ENCODE measurements at regions of chr5 and their contacts with region 1.

Region 1: DNA sequence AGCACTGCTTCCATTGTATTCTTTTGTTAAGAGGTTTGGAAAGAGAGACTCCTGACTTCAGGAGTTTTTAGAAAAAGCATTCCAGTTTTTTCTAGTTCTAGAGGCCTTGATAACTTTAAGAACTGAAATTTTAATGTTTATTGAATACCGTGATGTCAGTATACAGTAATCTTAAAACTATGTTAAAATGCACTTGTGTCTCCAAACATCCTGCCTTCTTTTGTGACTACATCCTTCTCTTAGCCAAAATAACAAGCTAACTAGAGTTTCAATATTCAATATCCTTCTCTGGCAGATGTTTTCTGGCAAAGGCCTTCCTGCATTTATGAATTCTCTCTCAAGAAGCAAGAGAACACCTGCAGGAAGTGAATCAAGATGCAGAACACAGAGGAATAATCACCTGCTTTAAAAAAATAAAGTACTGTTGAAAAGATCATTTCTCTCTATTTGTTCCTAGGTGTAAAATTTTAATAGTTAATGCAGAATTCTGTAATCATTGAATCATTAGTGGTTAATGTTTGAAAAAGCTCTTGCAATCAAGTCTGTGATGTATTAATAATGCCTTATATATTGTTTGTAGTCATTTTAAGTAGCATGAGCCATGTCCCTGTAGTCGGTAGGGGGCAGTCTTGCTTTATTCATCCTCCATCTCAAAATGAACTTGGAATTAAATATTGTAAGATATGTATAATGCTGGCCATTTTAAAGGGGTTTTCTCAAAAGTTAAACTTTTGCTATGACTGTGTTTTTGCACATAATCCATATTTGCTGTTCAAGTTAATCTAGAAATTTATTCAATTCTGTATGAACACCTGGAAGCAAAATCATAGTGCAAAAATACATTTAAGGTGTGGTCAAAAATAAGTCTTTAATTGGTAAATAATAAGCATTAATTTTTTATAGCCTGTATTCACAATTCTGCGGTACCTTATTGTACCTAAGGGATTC is 43.1 kb downstream of the NDFIP1 start:
- DNase-seq: peak; percentile 72 to 90 (median 86)
- H3K4me3 ChIP-seq: no peak overlapping the region
- H3K27ac ChIP-seq: no peak overlapping the region
- H3K4me1 ChIP-seq: no peaks in the 10 kb centered on the region
- H3K27me3 ChIP-seq: no peaks in the 10 kb centered on the region

Region 2: DNA sequence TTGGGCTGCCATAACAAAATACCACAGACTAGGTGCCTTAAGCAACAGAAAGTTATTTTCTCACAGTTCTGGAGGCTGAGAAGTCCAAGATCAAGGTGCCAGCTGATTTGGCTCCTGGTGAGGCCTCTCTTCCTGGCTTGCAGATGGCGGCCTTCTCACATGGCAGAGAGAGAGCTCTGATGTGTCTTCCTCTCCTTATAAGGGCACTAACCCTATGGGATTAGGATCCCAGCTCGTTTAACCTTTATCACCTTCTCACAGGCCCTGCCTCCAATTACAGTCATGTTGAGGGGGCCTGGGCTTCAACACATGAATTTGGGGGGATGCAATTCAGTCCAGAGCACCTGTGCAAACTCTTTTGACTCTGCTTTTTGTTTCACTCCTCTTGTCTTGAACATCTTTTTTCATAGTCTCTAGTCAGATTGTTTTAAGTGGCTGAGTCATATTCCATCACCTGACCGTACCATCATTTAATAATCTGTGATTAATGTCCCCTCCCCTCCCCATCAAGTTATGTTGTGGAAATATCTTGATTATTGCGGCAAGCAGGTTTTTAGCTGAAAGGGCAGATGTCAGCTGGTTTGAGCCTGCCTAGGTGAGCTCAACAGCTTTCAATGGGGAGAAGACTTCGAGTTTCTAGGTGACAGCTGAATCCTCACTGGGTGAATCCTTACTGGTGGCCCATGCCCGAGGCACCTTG is 18.7 kb after region 1 on chr5:
- CTCF ChIA-PET with region 1: no interaction called
- POLR2A ChIA-PET with region 1: no interaction called
- DNase-seq: no peak
- H3K4me3 ChIP-seq: no peak overlapping the region
- H3K27ac ChIP-seq: no peak overlapping the region
- H3K4me1 ChIP-seq: no peaks in the 10 kb centered on the region
- H3K27me3 ChIP-seq: no peaks in the 10 kb centered on the region

Region 3: DNA sequence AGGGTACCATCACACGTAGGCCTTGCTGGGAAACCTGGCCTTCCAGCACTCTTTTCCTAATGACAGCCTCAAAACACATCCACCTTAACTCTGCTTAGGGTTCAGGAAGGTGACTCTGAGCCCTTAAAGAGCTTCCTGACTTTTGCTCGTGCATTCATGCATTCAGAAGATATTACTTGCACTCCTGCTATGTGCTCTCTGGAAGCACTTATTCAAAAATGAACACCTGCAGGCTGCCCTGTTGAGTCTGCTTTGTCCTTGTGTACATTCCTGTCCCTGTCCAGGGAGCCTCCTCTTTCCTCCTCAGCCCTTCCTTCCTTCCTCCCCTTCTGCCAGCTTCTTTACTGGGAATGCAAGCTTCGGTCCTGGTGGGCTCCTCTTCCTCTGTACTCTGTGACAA is 111.6 kb after region 1 on chr5:
- CTCF ChIA-PET with region 1: no interaction called
- POLR2A ChIA-PET with region 1: no interaction called
- DNase-seq: no peak
- H3K4me3 ChIP-seq: no peak overlapping the region
- H3K27ac ChIP-seq: no peak overlapping the region
- H3K4me1 ChIP-seq: no peaks in the 10 kb centered on the region
- H3K27me3 ChIP-seq: peaks cover 0 to 2% (median 0%) of the 10 kb centered on the region in 5 experiments

Region 4: DNA sequence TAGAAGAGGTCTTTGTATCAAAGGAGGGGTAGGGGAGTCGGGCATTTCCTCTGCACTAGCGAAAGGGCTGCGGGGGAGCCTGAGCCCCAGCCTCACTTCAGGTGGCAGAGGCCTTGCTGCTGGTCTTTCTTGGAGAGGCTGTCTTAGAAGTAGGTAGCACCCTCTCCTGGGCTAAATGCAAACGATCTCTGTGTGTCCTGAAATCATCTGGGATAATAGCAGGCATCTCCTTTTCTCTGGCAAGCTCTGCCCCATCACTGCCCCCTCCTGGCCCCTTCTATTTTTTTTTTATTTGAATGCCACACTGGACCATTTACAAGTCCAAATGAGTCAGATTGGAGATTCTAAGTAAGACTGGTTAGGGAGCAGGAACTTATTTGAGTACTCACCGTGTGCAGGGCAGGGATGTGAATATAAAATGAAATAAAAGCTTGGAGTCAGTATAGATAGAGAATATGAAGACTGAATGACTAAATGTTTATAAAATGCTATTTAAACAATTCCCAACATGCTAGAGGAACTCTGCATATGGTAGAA is 397.1 kb after region 1 on chr5:
- CTCF ChIA-PET with region 1: interaction called, 17 read pairs
- POLR2A ChIA-PET with region 1: no interaction called
- DNase-seq: peak; percentile 67 to 69 (median 67)
- H3K4me3 ChIP-seq: no peak overlapping the region
- H3K27ac ChIP-seq: no peak overlapping the region
- H3K4me1 ChIP-seq: peaks cover 0 to 7% (median 6%) of the 10 kb centered on the region in 4 experiments
- H3K27me3 ChIP-seq: peaks cover 16 to 45% (median 18%) of the 10 kb centered on the region in 5 experiments

Measured in common myeloid progenitor, CD34-positive (primary cell).